OCI-LY7 (cell line): ENCODE measurements at regions of chr1 and their contacts with region 1.

Region 1: DNA sequence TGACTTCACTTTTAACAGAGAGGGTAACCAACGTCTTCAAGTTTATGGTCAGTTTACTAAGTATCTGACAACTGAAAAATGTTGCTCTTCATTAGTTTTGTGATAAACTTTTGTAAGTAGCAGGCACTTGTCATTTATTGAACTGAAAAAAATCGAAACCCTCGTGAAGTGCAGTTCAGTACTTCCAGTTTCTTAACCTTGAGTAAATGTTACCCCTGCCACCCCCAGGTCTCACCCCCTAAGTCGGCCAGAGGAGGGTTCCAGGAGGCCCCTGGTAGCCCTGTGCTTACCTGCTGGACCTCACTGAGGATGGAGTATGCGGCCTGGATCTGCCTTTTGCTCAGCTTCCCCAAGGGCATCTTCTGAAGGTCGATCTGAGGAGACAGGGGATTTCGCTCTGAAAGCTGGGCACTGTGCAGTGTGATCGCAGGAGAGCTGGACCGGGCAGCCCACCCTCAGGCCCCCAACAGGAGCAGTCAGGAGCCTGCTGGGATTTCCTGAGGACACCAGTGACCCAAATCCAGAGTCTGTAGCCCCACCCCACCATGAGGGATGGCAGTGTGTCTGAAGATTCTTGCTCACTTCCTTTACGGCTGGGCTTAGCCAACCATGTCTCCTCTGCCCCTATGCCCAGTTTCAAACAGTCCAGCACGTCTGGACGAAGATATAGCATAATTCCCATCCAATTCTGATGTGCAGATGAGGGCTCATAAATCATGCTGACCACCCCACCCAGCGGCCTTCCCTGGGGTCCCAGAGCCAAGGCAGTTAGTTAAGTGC is 37.6 kb downstream of the PARP1 start:
- DNase-seq: peak; percentile 83
- H3K4me3 ChIP-seq: peak overlapping the region; percentile 61
- H3K27ac ChIP-seq: peak overlapping the region; percentile 88
- H3K4me1 ChIP-seq: peaks cover 53% of the 10 kb centered on the region
- CTCF ChIP-seq: no peak

Region 2: GRCh38 chr1:226126824-226127569 is 243.3 kb before region 1 on chr1:
- CTCF ChIA-PET with region 1: no interaction called
- POLR2A ChIA-PET with region 1: interaction called, 7 read pairs
- intact Hi-C with region 1: loop called (anchors 1 kb)
- DNase-seq: peak; percentile 82
- H3K4me3 ChIP-seq: peak overlapping the region; percentile 56
- H3K27ac ChIP-seq: peak overlapping the region; percentile 94
- H3K4me1 ChIP-seq: peaks cover 65% of the 10 kb centered on the region
- CTCF ChIP-seq: no peak

Region 3: GRCh38 chr1:226248091-226248490 is 122.2 kb before region 1 on chr1:
- CTCF ChIA-PET with region 1: no interaction called
- POLR2A ChIA-PET with region 1: no interaction called
- intact Hi-C with region 1: no loop called
- DNase-seq: no peak
- H3K4me3 ChIP-seq: no peak overlapping the region
- H3K27ac ChIP-seq: peak overlapping the region; percentile 12
- H3K4me1 ChIP-seq: peaks cover 18% of the 10 kb centered on the region
- CTCF ChIP-seq: no peak

Region 4: DNA sequence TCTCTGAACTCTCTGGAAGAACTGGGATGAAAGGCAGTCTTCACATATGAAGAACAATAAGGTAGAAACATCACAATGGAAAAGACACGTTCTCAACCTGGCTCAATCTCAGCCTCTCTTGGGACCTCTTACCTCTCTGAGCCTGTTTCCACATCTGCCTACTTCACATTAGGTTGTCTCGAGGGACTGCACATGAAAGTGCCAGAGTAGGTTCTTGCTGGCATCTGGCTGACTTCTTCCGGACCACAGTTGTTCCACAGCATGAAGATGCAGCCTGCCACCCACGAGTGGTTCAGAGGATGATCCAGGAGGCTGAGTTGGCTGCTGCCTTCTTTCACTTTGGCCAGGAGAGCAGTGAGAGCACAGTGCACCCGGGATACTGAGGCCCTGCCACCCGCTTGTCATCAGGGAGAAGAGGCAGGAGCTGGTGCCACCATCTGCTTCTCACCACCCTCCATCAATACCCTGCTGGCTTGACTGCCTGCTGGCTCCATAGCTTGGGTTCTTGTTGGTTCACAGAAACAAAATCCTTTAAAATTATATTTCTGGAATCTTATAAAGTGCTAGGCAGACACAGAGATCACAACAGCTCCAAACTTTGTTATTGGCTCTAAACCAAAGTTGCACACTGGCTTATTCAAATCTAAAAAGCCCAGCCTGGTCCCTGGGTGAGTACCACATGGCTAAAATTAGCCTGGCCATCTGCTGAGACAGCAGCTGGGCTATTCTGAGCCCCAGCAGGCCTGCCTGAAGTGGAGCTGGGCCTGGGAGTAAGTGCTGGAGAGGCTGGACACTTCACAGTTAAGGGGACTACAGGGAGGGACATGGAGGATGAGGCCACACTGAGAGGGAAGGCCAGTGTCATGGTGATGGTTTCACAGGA is 14.4 kb before region 1 on chr1:
- CTCF ChIA-PET with region 1: no interaction called
- POLR2A ChIA-PET with region 1: interaction called, 16 read pairs
- intact Hi-C with region 1: loop called (anchors 1 kb)
- DNase-seq: peak; percentile 96
- H3K4me3 ChIP-seq: peak overlapping the region; percentile 50
- H3K27ac ChIP-seq: peak overlapping the region; percentile 98
- H3K4me1 ChIP-seq: peaks cover 76% of the 10 kb centered on the region
- CTCF ChIP-seq: no peak

Region 5: GRCh38 chr1:226424228-226425003 is 54.1 kb after region 1 on chr1:
- CTCF ChIA-PET with region 1: no interaction called
- POLR2A ChIA-PET with region 1: no interaction called
- intact Hi-C with region 1: no loop called
- DNase-seq: peak; percentile 87
- H3K4me3 ChIP-seq: peak overlapping the region; percentile 51
- H3K27ac ChIP-seq: peak overlapping the region; percentile 66
- H3K4me1 ChIP-seq: peaks cover 65% of the 10 kb centered on the region
- CTCF ChIP-seq: peak; percentile 98

Region 6: GRCh38 chr1:227072991-227073390 is 702.7 kb after region 1 on chr1:
- CTCF ChIA-PET with region 1: no interaction called
- POLR2A ChIA-PET with region 1: no interaction called
- intact Hi-C with region 1: no loop called
- DNase-seq: no peak
- H3K4me3 ChIP-seq: no peak overlapping the region
- H3K27ac ChIP-seq: no peak overlapping the region
- H3K4me1 ChIP-seq: no peaks in the 10 kb centered on the region
- CTCF ChIP-seq: no peak